CD4-positive, alpha-beta T cell (primary cell): ENCODE measurements at regions of chr12 and their contacts with region 1.

Region 1: GRCh38 chr12:84924981-84925380 is 12.4 kb upstream of the SLC6A15 start:
- DNase-seq: no peak
- ATAC-seq: no peak
- H3K4me3 ChIP-seq: no peak overlapping the region
- H3K4me3 Mint-ChIP-seq: no peak overlapping the region
- H3K27ac ChIP-seq: no peak overlapping the region
- H3K27ac Mint-ChIP-seq: no peak overlapping the region
- H3K4me1 ChIP-seq: no peaks in the 10 kb centered on the region
- H3K4me1 Mint-ChIP-seq: no peaks in the 10 kb centered on the region
- H3K27me3 ChIP-seq: no peaks in the 10 kb centered on the region
- H3K27me3 Mint-ChIP-seq: peaks cover 12% of the 10 kb centered on the region
- CTCF ChIP-seq: no peak

Region 2: GRCh38 chr12:83046019-83046418 is 1879.0 kb before region 1 on chr12:
- CTCF ChIA-PET with region 1: no interaction called
- POLR2A ChIA-PET with region 1: no interaction called
- intact Hi-C with region 1: loop called in 1 of 2 experiments (anchors 5 kb)
- DNase-seq: no peak
- ATAC-seq: no peak
- H3K4me3 ChIP-seq: no peak overlapping the region
- H3K4me3 Mint-ChIP-seq: no peak overlapping the region
- H3K27ac ChIP-seq: no peak overlapping the region
- H3K27ac Mint-ChIP-seq: no peak overlapping the region
- H3K4me1 ChIP-seq: no peaks in the 10 kb centered on the region
- H3K4me1 Mint-ChIP-seq: no peaks in the 10 kb centered on the region
- H3K27me3 ChIP-seq: no peaks in the 10 kb centered on the region
- H3K27me3 Mint-ChIP-seq: no peaks in the 10 kb centered on the region
- CTCF ChIP-seq: no peak

Region 3: DNA sequence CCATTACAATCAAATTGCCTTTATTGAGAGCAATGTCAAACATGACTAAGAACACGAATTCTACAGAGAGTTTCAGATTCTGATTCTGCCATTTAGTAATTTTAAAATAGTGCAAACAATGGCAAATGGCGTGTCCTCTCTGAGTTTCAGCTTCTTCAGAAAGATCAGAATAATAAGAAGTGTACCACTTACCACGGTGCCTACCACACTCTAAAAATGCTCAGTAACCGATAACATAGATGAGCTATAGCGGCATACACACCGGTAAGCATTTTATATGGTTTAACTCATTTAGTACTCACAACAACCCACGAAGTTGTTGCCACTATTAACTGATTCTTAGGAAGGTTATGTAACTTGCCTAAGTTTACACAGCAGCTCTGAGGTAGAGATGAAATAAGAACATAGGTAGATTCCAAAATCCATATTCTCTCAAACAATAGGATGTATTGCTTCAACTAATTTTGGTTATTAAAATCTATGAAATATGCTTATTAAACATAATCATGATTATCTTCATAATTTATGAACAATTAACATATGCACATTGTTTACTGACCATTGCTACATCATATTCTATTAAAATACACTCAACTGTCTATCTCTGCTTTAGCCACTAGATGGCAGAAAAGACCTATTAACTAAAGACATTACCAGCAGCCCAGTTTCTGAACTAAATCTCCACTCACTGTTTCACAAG is 50.7 kb before region 1 on chr12:
- CTCF ChIA-PET with region 1: no interaction called
- POLR2A ChIA-PET with region 1: no interaction called
- intact Hi-C with region 1: no loop called
- DNase-seq: peak in 3 of 14 experiments; percentile 39 to 45 (median 43)
- ATAC-seq: peak; percentile 39
- H3K4me3 ChIP-seq: no peak overlapping the region
- H3K4me3 Mint-ChIP-seq: no peak overlapping the region
- H3K27ac ChIP-seq: no peak overlapping the region
- H3K27ac Mint-ChIP-seq: no peak overlapping the region
- H3K4me1 ChIP-seq: no peaks in the 10 kb centered on the region
- H3K4me1 Mint-ChIP-seq: no peaks in the 10 kb centered on the region
- H3K27me3 ChIP-seq: no peaks in the 10 kb centered on the region
- H3K27me3 Mint-ChIP-seq: no peaks in the 10 kb centered on the region
- CTCF ChIP-seq: peak; percentile 92

Region 4: GRCh38 chr12:84912198-84913128 is 12.5 kb before region 1 on chr12 and contains the start of gene SLC6A15:
- CTCF ChIA-PET with region 1: no interaction called
- POLR2A ChIA-PET with region 1: no interaction called
- intact Hi-C with region 1: no loop called
- DNase-seq: peak in 2 of 14 experiments; percentile 4 to 18
- ATAC-seq: no peak
- H3K4me3 ChIP-seq: no peak within 1 kb of the TSS
- H3K4me3 Mint-ChIP-seq: peak within 1 kb of the TSS; percentile 16
- H3K27ac ChIP-seq: no peak within 1 kb of the TSS
- H3K27ac Mint-ChIP-seq: no peak within 1 kb of the TSS
- H3K4me1 ChIP-seq: peaks cover 5% of the 10 kb centered on the region
- H3K4me1 Mint-ChIP-seq: peaks cover 19% of the 10 kb centered on the region
- H3K27me3 ChIP-seq: peaks cover 28 to 32% of the 10 kb centered on the region in 2 experiments
- H3K27me3 Mint-ChIP-seq: peaks cover 55% of the 10 kb centered on the region
- CTCF ChIP-seq: no peak
- total RNA-seq, gene SLC6A15: not detected